CD14-positive monocyte (primary cell): ENCODE measurements at regions of chr1 and their contacts with region 1.

Region 1: GRCh38 chr1:28112388-28113241 is 24.2 kb upstream of the EYA3 start:
- DNase-seq: peak; percentile 98 to 100 (median 99)
- H3K4me3 ChIP-seq: peak overlapping the region in 1 of 3 experiments; percentile 1
- H3K4me3 Mint-ChIP-seq: peak overlapping the region; percentile 12 to 33
- H3K27ac ChIP-seq: peak overlapping the region; percentile 87 to 100
- H3K27ac Mint-ChIP-seq: peak overlapping the region; percentile 98 to 100 (median 100)
- H3K4me1 ChIP-seq: peaks cover 77 to 86% of the 10 kb centered on the region in 2 donors
- H3K4me1 Mint-ChIP-seq: peaks cover 74% of the 10 kb centered on the region
- H3K27me3 ChIP-seq: no peaks in the 10 kb centered on the region
- H3K27me3 Mint-ChIP-seq: peaks cover 0 to 4% (median 4%) of the 10 kb centered on the region in 3 donors
- CTCF ChIP-seq: no peak

Region 2: DNA sequence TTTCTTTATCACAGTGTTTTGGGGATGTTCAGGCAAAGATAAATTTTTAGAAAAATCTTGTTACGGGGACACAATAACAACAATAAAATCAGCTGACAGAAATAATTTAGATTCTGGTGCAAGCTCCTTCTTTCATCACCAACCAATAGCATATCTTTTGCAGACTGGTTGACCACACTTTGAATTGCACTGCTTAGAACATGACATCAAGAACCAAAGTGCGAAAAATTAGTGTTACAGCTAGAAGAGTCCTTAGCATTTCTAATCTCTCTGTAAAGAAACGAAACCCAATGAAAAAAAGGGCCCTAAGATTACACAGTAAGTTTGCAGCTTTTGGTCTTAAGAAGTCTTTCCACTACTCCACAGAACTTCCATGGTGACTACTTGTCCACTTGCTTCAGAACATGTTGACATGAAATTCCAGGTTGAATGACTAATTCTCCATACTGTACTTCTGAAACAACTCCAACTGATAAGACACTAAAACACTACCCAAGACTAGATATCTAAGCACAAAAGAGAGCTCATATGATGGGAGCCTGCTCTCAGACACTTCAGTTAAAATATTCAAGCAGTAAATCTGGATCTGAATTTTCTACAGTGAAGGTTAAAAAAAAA is 121.6 kb before region 1 on chr1:
- intact Hi-C with region 1: no loop called
- DNase-seq: no peak
- H3K4me3 ChIP-seq: no peak overlapping the region
- H3K4me3 Mint-ChIP-seq: no peak overlapping the region
- H3K27ac ChIP-seq: no peak overlapping the region
- H3K27ac Mint-ChIP-seq: peak overlapping the region in 3 of 7 donors; percentile 3 to 43 (median 21)
- H3K4me1 ChIP-seq: peaks cover 3 to 11% of the 10 kb centered on the region in 2 donors
- H3K4me1 Mint-ChIP-seq: peaks cover 15% of the 10 kb centered on the region
- H3K27me3 ChIP-seq: no peaks in the 10 kb centered on the region
- H3K27me3 Mint-ChIP-seq: peaks cover 0 to 3% (median 2%) of the 10 kb centered on the region in 3 donors
- CTCF ChIP-seq: no peak

Region 3: GRCh38 chr1:28139025-28139712 is 26.6 kb after region 1 on chr1:
- intact Hi-C with region 1: loop called in 1 of 2 experiments (anchors 2 kb)
- DNase-seq: peak; percentile 94 to 98 (median 98)
- H3K4me3 ChIP-seq: no peak overlapping the region
- H3K4me3 Mint-ChIP-seq: peak overlapping the region in 1 of 2 donors; percentile 44
- H3K27ac ChIP-seq: peak overlapping the region; percentile 72 to 84
- H3K27ac Mint-ChIP-seq: peak overlapping the region; percentile 96 to 100 (median 99)
- H3K4me1 ChIP-seq: peaks cover 74 to 86% of the 10 kb centered on the region in 2 donors
- H3K4me1 Mint-ChIP-seq: peaks cover 78% of the 10 kb centered on the region
- H3K27me3 ChIP-seq: no peaks in the 10 kb centered on the region
- H3K27me3 Mint-ChIP-seq: peaks cover 0 to 3% (median 1%) of the 10 kb centered on the region in 3 donors
- CTCF ChIP-seq: no peak